ENCODE measurements at regions of chr14 and their contacts with region 1.

Region 1: GRCh38 chr14:54440873-54441868 is at the start of gene CNIH1:
- DNase-seq: peak; percentile 95
- H3K4me3 ChIP-seq: peak within 1 kb of the TSS; percentile 49 to 84 (median 62)
- H3K27ac ChIP-seq: peak within 1 kb of the TSS; percentile 79 to 98 (median 94)
- H3K4me1 ChIP-seq: peaks cover 0 to 61% (median 31%) of the 10 kb centered on the region in 4 donors
- H3K27me3 ChIP-seq: no peaks in the 10 kb centered on the region
- CTCF ChIP-seq: peak; percentile 79 to 93 (median 86)
- EP300 ChIP-seq: no peak
- POLR2A ChIP-seq: no peak
- total RNA-seq, gene CNIH1: 147 to 261 (median 201) TPM

Region 2: GRCh38 chr14:54282849-54283248 is 158.3 kb before region 1 on chr14:
- intact Hi-C with region 1: no loop called
- DNase-seq: no peak
- H3K4me3 ChIP-seq: no peak overlapping the region
- H3K27ac ChIP-seq: no peak overlapping the region
- H3K4me1 ChIP-seq: no peaks in the 10 kb centered on the region
- H3K27me3 ChIP-seq: no peaks in the 10 kb centered on the region
- CTCF ChIP-seq: no peak
- EP300 ChIP-seq: no peak
- POLR2A ChIP-seq: no peak

Region 3: DNA sequence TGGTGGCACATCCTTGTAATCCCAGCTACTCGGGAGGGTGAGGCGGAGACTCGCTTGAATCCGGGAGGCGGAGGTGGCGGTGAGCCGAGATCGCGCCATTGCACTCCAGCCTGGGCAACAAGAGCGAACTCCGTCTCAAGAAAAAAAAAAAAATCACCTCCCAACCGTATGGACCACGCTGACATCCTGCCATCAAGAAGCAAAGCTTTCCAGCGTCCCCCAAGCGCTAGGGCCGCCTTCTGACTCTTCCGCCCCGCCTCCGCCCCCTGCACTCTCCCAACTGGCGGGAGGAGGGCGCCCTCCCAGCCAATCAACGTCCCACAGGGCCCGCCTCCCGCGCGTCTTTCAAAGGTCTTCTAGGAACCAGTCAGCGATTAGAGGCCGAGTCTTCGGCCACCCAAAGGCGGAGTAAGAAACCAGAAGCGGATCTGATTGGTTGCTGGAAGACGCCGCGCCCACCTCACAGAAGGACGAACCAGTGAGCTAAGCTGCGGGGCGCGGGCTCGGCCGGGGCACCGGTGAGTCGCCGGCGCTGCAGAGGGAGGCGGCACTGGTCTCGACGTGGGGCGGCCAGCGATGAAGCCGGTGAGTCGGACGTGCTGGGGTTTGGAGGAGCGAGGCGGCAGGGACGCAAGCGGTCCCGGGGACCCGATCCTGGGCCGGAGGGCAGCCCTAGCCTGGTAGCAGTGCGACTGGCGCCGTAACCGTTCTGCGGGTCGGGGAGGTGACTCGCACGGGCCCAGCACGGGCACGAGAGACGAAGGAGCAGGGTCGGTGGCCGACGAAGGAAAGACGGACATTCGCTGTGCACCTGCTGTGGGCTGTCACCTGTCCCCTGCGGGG is 44.5 kb before region 1 on chr14 and contains the start of gene CDKN3:
- intact Hi-C with region 1: loop called (anchors 5 kb)
- DNase-seq: peak; percentile 99
- H3K4me3 ChIP-seq: peak within 1 kb of the TSS; percentile 43 to 84 (median 68)
- H3K27ac ChIP-seq: peak within 1 kb of the TSS in 3 of 4 donors; percentile 20 to 65 (median 54)
- H3K4me1 ChIP-seq: peaks cover 0 to 15% (median 7%) of the 10 kb centered on the region in 4 donors
- H3K27me3 ChIP-seq: no peaks in the 10 kb centered on the region
- CTCF ChIP-seq: peak in 3 of 4 experiments; percentile 29 to 47 (median 42)
- EP300 ChIP-seq: no peak
- POLR2A ChIP-seq: peak; percentile 21 to 60
- total RNA-seq, gene CDKN3: 1.1 to 2.4 (median 1.8) TPM in 3 of 4 donors, not detected in the other

Region 4: GRCh38 chr14:54475187-54475899 is 34.2 kb after region 1 on chr14:
- intact Hi-C with region 1: no loop called
- DNase-seq: no peak
- H3K4me3 ChIP-seq: no peak overlapping the region
- H3K27ac ChIP-seq: no peak overlapping the region
- H3K4me1 ChIP-seq: peaks cover 0 to 27% (median 13%) of the 10 kb centered on the region in 4 donors
- H3K27me3 ChIP-seq: no peaks in the 10 kb centered on the region
- CTCF ChIP-seq: no peak
- EP300 ChIP-seq: no peak
- POLR2A ChIP-seq: no peak

Region 5: DNA sequence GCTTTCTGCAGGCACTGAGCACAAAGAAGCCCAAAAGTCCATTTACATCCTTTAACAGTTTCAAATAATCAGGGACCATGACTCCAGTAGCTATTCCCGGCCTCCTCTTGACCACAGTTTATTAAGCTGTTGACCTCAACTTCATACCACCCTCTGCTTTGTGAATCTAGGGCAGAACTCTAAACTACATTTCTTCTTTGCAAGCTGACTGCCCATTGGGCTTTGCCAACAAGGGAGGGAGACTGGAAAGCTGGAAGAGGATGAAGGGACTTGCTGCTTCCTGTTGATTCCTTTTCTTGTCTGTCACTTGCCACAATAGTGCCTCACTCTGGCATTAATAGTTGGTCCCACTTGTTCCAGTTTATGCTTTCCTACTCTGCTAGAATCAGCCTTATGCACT is 71.2 kb after region 1 on chr14:
- intact Hi-C with region 1: no loop called
- DNase-seq: no peak
- H3K4me3 ChIP-seq: no peak overlapping the region
- H3K27ac ChIP-seq: no peak overlapping the region
- H3K4me1 ChIP-seq: peaks cover 0 to 30% (median 19%) of the 10 kb centered on the region in 4 donors
- H3K27me3 ChIP-seq: no peaks in the 10 kb centered on the region
- CTCF ChIP-seq: no peak
- EP300 ChIP-seq: no peak
- POLR2A ChIP-seq: no peak

Measured in sigmoid colon (tissue), 7 donors.